ENCODE measurements at regions of chr15 and their contacts with region 1.

Region 1: DNA sequence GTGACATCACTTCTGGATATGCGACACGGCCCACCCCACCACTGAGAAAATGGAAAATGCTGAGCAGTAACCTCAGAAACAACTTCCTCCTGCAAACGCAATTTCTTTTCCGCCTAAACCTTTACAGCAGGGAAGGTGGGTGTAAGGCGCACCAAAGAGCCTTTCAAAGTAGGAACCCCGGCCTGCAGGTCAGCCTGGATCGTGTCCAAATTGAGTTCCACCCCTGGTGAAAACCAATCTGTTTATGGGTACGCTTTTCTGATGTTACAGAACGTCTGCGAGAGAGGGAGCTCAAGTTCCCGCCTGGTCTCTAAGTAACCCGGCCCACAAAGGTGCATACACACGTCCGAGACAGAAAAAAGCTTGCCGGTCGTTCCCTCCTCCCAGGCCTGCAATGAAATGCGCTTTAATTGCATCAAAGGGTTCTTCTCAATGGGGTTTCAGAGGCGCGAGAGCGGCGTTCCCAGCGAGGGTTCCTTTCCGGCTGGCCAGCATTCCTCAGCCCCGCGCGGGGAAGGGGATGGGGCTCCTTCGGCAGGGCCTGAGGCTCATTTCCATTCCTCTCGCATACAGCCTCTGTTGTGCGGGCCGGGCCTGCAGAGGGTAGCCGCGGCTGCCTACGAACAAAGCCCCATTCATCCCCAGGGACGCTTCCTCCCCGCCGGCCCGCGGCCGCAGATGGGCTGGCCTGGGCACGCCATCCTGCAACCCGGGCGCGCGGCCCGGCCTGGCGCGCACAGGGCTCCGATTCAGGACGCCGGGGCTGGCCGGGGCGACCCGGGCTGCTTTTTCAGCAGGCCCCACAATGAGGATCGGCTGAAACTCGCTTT is 138.1 kb downstream of the TMCO5A start:
- DNase-seq: peak; percentile 72
- H3K4me3 Mint-ChIP-seq: peak overlapping the region; percentile 64
- H3K27ac Mint-ChIP-seq: peak overlapping the region; percentile 75
- H3K4me1 Mint-ChIP-seq: peaks cover 11% of the 10 kb centered on the region
- H3K27me3 Mint-ChIP-seq: no peaks in the 10 kb centered on the region
- CTCF ChIP-seq: no peak

Region 2: DNA sequence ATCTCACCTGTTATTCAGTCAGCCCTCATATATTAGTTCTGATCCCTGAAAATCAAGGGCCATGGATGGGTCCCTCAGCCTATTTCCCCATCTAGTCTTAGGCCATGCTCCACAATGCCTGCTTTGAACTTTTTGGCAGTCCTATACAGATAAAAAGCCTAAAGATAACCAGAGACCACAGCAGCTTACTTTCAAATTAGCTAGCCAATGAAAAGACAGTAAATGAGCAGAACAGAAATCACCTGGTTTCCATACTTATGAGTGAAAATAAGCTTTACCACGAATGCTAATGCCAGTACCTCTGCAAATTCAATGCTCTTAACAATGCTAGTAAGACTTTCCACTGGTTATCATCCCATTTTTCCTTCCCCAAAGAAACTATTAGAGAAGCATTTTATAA is 38.5 kb after region 1 on chr15:
- CTCF ChIA-PET with region 1: no interaction called
- intact Hi-C with region 1: no loop called
- DNase-seq: no peak
- H3K4me3 Mint-ChIP-seq: no peak overlapping the region
- H3K27ac Mint-ChIP-seq: no peak overlapping the region
- H3K4me1 Mint-ChIP-seq: no peaks in the 10 kb centered on the region
- H3K27me3 Mint-ChIP-seq: no peaks in the 10 kb centered on the region
- CTCF ChIP-seq: no peak

Region 3: DNA sequence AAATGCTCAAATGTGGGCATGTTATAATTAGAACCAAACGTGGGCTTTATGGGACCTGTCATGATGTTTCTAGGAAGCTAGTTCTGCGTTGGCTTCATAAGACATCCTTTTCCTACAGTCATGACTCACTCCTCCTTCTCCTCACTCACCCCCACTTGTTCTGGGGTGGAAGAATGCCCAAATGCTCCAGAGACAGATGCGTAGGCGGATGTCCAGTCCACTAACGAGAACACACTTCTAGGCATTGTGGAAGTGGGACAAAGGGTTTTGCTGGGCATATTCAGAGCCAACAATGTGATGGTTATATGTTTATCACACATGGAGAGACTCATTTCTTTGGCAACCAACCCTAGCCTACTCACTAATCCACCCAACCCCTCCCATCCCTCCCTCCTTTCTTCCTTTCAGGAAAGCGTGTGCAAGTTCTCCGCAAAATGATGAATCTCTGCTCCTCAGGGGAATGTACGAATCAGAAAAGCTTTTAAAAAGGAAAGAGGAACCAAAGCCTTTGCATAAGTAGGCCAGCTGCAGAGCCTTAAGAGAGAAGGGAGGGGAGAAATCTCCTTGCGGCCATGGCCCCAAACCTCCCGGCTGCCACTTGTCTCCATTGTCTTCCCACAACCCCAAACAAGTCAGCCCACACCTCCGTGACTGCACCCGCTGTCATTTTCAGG is 57.1 kb after region 1 on chr15:
- CTCF ChIA-PET with region 1: no interaction called
- intact Hi-C with region 1: loop called (anchors 10 kb)
- DNase-seq: no peak
- H3K4me3 Mint-ChIP-seq: no peak overlapping the region
- H3K27ac Mint-ChIP-seq: no peak overlapping the region
- H3K4me1 Mint-ChIP-seq: no peaks in the 10 kb centered on the region
- H3K27me3 Mint-ChIP-seq: no peaks in the 10 kb centered on the region
- CTCF ChIP-seq: no peak

Region 4: GRCh38 chr15:38252481-38253412 is 180.2 kb after region 1 on chr15 and contains the start of gene SPRED1:
- CTCF ChIA-PET with region 1: interaction called, 6 read pairs
- intact Hi-C with region 1: loop called (anchors 2 kb)
- DNase-seq: peak; percentile 54
- H3K4me3 Mint-ChIP-seq: peak within 1 kb of the TSS; percentile 78
- H3K27ac Mint-ChIP-seq: peak within 1 kb of the TSS; percentile 91
- H3K4me1 Mint-ChIP-seq: no peaks in the 10 kb centered on the region
- H3K27me3 Mint-ChIP-seq: no peaks in the 10 kb centered on the region
- CTCF ChIP-seq: no peak
- total RNA-seq, gene SPRED1: 16.1 and 16.4 TPM in 2 replicates

Region 5: GRCh38 chr15:38274135-38274534 is 201.6 kb after region 1 on chr15:
- CTCF ChIA-PET with region 1: no interaction called
- intact Hi-C with region 1: loop called (anchors 5 kb)
- DNase-seq: no peak
- H3K4me3 Mint-ChIP-seq: no peak overlapping the region
- H3K27ac Mint-ChIP-seq: no peak overlapping the region
- H3K4me1 Mint-ChIP-seq: peaks cover 5% of the 10 kb centered on the region
- H3K27me3 Mint-ChIP-seq: no peaks in the 10 kb centered on the region
- CTCF ChIP-seq: no peak